Panc1 (cell line): ENCODE measurements at regions of chr3 and their contacts with region 1.

Region 1: DNA sequence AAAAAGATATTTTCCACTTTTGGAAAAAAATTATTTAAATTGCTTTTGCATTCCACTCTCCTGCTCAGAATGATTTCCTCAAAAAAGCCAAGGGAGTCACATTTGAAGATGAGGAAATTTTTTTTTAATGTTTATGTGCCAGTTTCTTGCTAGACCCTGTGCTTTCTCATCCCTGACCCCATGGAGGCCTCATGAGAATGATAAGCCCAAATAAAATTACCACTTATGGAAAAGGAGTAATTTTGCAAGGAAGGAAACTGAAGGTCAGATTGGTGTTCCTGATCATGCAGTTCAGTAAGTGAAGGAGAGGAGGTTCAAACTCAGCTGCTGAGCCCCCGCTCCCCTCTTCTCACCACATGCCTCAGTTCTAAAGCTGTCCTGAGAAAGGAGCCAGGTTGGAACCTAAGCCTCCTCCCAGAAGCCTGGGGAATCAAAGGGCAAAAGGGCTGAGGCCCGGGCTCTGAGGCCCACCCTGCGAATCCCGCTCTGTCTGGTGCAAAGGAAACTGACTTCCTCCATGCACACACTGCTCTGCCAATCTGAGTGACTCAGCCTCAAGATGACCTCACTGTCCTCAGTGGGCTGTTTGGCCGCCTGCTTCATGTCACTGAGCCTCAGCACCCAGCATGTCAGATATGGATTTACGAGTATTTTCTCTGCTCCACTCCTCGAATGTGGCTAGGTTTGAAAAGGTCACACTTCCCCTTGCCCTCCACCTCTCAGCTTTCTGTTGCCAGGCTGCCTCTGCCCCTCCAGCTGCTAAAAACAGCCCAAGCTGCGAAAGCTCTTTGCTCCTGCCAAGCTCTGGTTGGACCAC is 56.9 kb upstream of the FLNB start:
- DNase-seq: no peak
- ATAC-seq: peak; percentile 72
- H3K4me3 ChIP-seq: no peak overlapping the region
- H3K27ac ChIP-seq: peak overlapping the region; percentile 70
- H3K4me1 ChIP-seq: peaks cover 18% of the 10 kb centered on the region
- H3K27me3 ChIP-seq: no peaks in the 10 kb centered on the region
- CTCF ChIP-seq: no peak

Region 2: DNA sequence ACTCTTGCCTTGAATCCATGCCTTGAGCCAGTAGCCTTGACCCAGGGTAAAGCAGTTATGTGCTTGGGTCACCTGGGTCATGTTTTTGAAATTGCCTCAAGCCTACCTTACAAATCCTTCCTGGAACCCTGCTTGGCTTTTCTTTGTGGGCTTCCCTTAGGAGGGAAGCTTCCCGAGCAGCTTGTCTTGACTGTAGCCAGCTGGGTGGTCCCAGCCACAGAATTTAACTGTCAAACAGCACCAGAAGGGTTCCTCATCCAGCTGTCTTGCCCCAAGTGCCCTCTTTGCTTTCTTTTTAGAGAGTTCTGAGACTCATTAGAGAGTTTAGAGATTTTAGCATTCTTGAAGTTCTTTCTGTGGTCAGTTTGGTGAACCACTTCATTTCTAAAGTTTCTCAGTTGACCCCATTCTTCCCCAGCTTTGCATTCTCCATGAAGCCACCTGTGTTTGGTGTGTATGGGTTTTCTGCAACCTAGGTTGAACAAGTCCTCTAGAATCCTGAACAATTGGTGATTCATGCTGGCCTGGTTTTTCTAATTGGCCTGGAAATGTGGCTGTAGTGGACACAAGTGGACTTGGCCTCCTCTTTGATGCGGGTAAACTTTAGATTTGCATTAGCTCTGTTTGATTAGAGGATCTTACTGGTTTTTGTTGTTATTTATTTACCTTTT is 90.5 kb after region 1 on chr3:
- CTCF ChIA-PET with region 1: no interaction called
- POLR2A ChIA-PET with region 1: interaction called, 10 read pairs
- in situ Hi-C with region 1: no loop called
- intact Hi-C with region 1: no loop called
- DNase-seq: no peak
- ATAC-seq: 0 out of 2 replicates have a peak, but pooled peaks have one; percentile 2
- H3K4me3 ChIP-seq: no peak overlapping the region; a peak in 1 of 4 replicates
- H3K27ac ChIP-seq: peak overlapping the region; percentile 96
- H3K4me1 ChIP-seq: peaks cover 92% of the 10 kb centered on the region
- H3K27me3 ChIP-seq: no peaks in the 10 kb centered on the region
- CTCF ChIP-seq: no peak

Region 3: DNA sequence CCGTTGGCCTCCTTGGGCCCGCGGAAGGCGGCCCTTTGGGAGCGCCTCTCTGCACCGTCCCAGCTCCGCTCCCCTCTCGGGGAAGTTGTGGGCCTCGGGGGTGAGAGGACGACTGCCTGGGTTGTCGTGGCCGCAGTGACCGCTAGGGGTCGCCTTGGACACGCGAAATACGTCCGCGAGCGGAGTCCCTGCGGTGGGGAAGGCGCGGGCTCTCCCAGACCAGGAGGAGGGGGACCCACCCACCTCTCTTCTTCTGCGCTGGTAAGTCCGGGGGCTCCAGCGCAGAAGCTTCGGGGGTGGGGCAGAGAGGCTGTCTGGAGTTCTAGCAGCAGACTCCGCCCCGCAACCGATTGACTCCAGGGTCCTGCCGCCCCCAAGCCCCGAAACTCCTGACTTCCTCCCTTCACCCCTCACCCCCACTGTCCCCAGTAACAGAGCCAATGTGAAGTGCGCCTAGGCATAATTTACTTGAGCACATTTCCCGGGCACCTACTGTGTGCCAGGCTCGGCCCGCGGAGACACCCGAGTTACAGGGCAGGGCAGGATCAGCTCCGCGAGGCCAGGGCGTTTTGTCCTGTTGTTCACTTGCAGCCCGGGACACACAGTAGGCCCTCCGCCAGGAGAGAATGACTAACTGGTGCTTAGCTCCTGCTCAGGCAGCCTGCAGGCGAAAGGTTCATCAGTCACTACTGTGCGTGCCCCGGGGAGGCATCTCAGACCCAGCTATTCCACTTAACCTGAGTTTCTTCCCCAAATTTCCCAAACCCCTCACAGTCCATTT is 226.7 kb after region 1 on chr3:
- CTCF ChIA-PET with region 1: no interaction called
- POLR2A ChIA-PET with region 1: no interaction called
- in situ Hi-C with region 1: no loop called
- intact Hi-C with region 1: loop called (anchors 10 kb)
- DNase-seq: no peak
- ATAC-seq: peak; percentile 79
- H3K4me3 ChIP-seq: peak overlapping the region; percentile 29 to 45
- H3K27ac ChIP-seq: peak overlapping the region; percentile 51
- H3K4me1 ChIP-seq: peaks cover 31% of the 10 kb centered on the region
- H3K27me3 ChIP-seq: no peaks in the 10 kb centered on the region
- CTCF ChIP-seq: peak; percentile 94

Region 4: GRCh38 chr3:58249358-58250092 is 298.3 kb after region 1 on chr3:
- CTCF ChIA-PET with region 1: no interaction called
- POLR2A ChIA-PET with region 1: no interaction called
- in situ Hi-C with region 1: no loop called
- intact Hi-C with region 1: no loop called
- DNase-seq: no peak
- ATAC-seq: peak; percentile 70
- H3K4me3 ChIP-seq: no peak overlapping the region
- H3K27ac ChIP-seq: no peak overlapping the region
- H3K4me1 ChIP-seq: peaks cover 4% of the 10 kb centered on the region
- H3K27me3 ChIP-seq: no peaks in the 10 kb centered on the region
- CTCF ChIP-seq: peak; percentile 47